Aorta (tissue), 5 donors: ENCODE measurements at regions of chr2 and their contacts with region 1.

Region 1: DNA sequence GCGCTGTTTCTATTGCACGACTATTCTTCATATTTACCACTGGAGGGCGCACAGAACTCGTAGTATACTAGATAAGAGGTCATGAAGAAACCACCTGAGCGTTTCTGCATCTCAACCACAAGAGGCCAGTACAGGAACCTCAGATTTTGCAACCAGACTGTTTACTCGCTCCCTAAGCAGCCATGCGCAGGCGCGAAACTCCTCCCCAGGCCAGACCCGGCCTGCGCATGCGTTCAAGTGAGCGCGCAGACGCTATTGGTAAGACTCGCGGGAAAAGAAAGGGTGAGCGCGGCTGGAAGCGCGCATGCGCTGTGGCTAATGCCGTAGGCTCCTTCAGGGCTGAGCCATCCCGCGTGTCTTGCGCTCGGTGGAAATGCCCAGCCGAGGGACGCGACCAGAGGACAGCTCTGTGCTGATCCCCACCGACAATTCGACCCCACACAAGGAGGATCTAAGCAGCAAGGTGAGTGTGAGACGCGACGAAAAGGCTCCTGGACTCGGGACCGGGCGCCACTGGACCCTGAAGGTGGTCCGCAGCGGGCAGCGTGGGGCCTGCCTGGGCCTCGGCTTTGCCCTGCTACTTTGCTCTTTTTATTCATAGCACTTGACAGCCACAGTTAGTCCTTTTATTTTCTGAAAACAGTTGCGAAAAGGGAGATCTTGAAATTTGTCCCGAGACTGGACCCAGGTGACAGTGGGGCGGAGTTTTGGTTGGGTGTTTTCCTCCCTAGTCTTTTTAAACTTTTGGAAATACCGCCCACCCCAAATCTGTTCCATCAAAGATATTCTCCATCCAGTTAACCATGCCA is at the start of gene ASNSD1:
- DNase-seq: peak; percentile 100
- ATAC-seq: peak; percentile 99
- H3K4me3 ChIP-seq: peak within 1 kb of the TSS; percentile 54 to 81
- H3K27ac ChIP-seq: peak within 1 kb of the TSS in 1 of 2 donors; percentile 76
- H3K4me1 ChIP-seq: no peaks in the 10 kb centered on the region
- H3K27me3 ChIP-seq: peaks cover 0 to 1% of the 10 kb centered on the region in 2 donors
- total RNA-seq, gene ASNSD1: 30.2 to 37.7 TPM

Region 2: DNA sequence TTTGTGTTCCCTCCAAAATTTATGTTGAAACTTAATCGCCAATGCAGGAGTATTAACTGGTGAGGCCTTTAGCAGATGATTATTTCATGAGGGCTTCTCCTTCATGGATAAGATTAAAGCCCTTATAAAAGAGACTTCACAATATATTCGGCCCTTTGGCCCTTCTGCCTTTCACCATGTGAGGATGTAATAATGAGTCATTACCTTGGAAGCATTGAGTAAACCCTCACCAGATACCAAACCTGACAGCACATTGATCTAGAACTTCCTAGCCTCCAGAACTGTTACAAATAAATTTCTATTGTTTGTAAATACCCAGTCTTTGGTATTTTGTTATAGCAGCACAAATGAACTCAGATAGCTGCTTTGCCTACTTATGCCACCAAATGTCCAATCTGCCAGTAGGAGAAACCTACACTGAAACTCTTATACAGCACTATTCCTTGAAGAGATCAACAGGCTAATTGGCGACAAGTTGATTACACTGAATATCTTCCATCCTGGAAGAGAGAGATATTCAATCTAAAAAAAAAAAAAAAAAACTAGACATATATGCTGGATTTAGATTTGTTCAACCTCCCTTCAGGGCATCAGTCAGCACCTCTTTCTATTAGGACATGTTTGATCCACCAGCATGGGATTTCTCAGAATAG is 355.9 kb before region 1 on chr2:
- intact Hi-C with region 1: no loop called
- DNase-seq: no peak
- ATAC-seq: no peak
- H3K4me3 ChIP-seq: no peak overlapping the region
- H3K27ac ChIP-seq: no peak overlapping the region
- H3K4me1 ChIP-seq: no peaks in the 10 kb centered on the region
- H3K27me3 ChIP-seq: no peaks in the 10 kb centered on the region

Region 3: DNA sequence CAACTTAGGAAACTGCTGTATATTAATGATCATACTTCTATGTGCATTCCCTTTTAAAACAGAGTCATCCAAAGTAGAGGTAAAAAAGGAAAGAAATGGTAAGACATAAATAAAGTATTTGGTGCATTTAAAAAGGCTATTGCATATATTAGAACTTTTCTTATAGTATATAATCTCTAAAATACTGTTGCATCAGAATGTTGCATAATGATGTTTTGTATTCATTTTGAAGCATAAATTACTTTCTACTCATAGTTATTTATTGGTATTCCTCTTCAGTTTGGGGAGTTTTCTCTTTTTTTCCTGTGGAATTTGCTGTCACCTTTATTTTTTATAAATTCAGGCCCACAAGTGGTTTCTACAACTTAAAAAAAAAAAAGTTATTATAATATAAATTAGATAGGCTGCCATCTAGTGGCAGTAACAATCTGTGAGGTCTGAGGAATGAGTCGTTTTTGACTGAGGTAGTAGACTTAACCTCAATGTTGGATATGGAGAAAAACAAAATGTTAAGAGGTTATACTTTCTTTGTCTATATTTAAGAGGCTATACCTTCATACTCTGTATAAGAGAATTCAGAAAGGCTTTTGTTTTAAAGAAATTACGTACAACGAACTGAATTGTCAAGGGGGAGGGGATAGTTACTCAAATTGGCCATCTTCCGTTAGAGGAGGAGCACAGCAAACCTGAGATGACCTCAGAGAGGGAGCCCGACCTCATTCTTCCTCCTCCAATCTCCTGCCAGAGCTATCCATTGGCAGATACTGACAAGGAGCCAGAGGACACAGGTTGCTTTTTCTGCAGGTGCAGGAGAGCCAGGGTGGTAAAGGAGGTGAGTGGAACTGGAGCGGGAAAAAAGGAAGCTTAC is 36.9 kb after region 1 on chr2:
- intact Hi-C with region 1: loop called (anchors 2 kb)
- DNase-seq: no peak
- ATAC-seq: peak; percentile 68
- H3K4me3 ChIP-seq: no peak overlapping the region
- H3K27ac ChIP-seq: no peak overlapping the region
- H3K4me1 ChIP-seq: no peaks in the 10 kb centered on the region
- H3K27me3 ChIP-seq: no peaks in the 10 kb centered on the region

Region 4: GRCh38 chr2:189783927-189784867 is 122.8 kb after region 1 on chr2 and contains the starts of genes ORMDL1 and PMS1:
- intact Hi-C with region 1: loop called in 1 of 2 experiments (anchors 10 kb)
- DNase-seq: peak; percentile 97 to 99
- ATAC-seq: peak; percentile 100
- H3K4me3 ChIP-seq: peak within 1 kb of the TSS; percentile 68 to 78
- H3K27ac ChIP-seq: peak within 1 kb of the TSS; percentile 81 to 85
- H3K4me1 ChIP-seq: peaks cover 0 to 3% of the 10 kb centered on the region in 2 donors
- H3K27me3 ChIP-seq: no peaks in the 10 kb centered on the region
- total RNA-seq, gene ORMDL1: 52.4 to 63.4 TPM
- total RNA-seq, gene PMS1: 17.4 to 33.3 TPM

Region 5: GRCh38 chr2:189799531-189799930 is 138.2 kb after region 1 on chr2:
- intact Hi-C with region 1: no loop called
- DNase-seq: no peak
- ATAC-seq: no peak
- H3K4me3 ChIP-seq: no peak overlapping the region
- H3K27ac ChIP-seq: no peak overlapping the region
- H3K4me1 ChIP-seq: no peaks in the 10 kb centered on the region
- H3K27me3 ChIP-seq: no peaks in the 10 kb centered on the region